B cell (primary cell): ENCODE measurements at regions of chr9 and their contacts with region 1.

Region 1: GRCh38 chr9:21443849-21444625 is 3.8 kb downstream of the IFNA1 start:
- DNase-seq: peak; percentile 88
- ATAC-seq: peak; percentile 92
- H3K4me3 ChIP-seq: no peak overlapping the region
- H3K4me3 Mint-ChIP-seq: peak overlapping the region; percentile 27
- H3K27ac ChIP-seq: peak overlapping the region in 1 of 2 donors; percentile 53
- H3K27ac Mint-ChIP-seq: peak overlapping the region; percentile 5
- H3K4me1 ChIP-seq: peaks cover 12 to 14% of the 10 kb centered on the region in 2 donors
- H3K4me1 Mint-ChIP-seq: peaks cover 13% of the 10 kb centered on the region
- H3K27me3 ChIP-seq: peaks cover 0 to 12% (median 3%) of the 10 kb centered on the region in 4 experiments
- H3K27me3 Mint-ChIP-seq: peaks cover 17% of the 10 kb centered on the region
- CTCF ChIP-seq: no peak

Region 2: DNA sequence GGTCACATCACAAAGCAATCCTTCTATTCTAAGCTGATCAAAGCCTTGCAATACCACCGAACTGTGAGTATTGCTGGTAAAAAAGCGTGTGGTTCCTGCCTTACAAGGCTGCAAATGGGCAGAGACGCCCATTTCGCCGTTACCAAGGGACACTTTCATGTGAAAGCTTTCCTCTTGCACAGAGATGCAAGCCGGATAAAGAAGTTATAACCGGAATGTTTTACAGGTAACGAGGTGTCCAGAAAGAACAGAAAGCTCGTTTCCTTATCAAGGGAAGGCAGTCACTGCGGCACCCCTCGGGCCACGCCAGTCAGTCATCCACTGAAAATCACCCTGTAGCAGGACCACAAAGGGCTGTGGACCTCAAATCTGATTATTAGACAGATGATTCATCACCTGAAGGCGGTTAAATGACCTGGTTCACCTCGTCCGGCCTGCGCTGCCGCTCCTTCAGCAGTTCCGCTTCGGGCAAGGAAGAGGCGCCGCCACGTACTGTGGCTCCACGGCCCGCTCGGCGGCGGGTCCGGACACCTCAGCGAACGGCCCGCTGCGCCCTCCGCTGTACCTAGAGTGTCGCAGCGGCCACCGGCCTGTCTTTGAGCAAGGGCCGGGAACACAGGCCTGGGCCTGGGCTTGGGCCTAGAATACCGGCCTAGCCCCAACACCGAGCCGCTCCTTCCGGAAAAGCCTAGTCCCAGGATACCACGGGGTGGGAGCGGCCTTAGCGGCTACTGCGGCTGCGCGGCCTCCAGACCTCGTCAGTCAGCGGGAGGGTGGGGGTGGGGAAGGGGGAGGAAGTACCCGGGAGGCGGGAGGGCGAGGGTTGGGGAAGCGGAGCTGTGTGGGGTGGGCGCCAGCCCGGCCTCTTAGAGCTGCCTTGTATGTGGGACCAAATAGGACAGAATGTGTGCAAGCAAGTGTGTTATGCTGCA is 109.1 kb before region 1 on chr9 and contains the start of gene KLHL9:
- CTCF ChIA-PET with region 1: interaction called, 4 read pairs
- POLR2A ChIA-PET with region 1: no interaction called
- intact Hi-C with region 1: loop called (anchors 2 kb)
- DNase-seq: peak; percentile 93
- ATAC-seq: peak; percentile 89
- H3K4me3 ChIP-seq: peak within 1 kb of the TSS; percentile 83 to 97 (median 89)
- H3K4me3 Mint-ChIP-seq: peak within 1 kb of the TSS; percentile 95
- H3K27ac ChIP-seq: peak within 1 kb of the TSS; percentile 90
- H3K27ac Mint-ChIP-seq: peak within 1 kb of the TSS; percentile 92
- H3K4me1 ChIP-seq: peaks cover 18 to 27% of the 10 kb centered on the region in 2 donors
- H3K4me1 Mint-ChIP-seq: peaks cover 49% of the 10 kb centered on the region
- H3K27me3 ChIP-seq: peaks cover 0 to 6% (median under 1%) of the 10 kb centered on the region in 4 experiments
- H3K27me3 Mint-ChIP-seq: peaks cover 12% of the 10 kb centered on the region
- CTCF ChIP-seq: no peak
- total RNA-seq, gene KLHL9: 17.5 and 17.6 TPM in 2 replicates

Region 3: DNA sequence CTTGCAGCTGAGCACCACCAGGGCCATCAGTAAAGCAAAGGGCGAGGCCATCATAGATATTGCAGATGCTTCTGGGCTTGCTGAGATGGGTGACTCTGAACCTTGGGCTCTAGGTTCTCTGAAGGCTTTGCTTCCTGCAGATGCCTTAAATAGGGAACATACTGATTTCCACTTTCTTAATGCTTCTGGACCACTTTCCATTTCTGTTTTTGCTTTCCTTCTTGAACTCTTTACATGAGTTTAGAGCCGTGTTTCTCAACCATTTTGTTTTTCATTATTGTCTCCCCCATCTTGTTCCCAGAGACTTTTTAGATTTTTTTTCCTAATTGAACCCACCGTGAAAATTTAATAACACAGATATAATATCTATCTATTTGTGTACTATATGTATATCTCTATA is 76.1 kb before region 1 on chr9 and contains the start of gene IFNA13:
- CTCF ChIA-PET with region 1: no interaction called
- POLR2A ChIA-PET with region 1: no interaction called
- intact Hi-C with region 1: loop called (anchors 2 kb)
- DNase-seq: no peak
- ATAC-seq: no peak
- H3K4me3 ChIP-seq: no peak within 1 kb of the TSS
- H3K4me3 Mint-ChIP-seq: no peak within 1 kb of the TSS
- H3K27ac ChIP-seq: no peak within 1 kb of the TSS
- H3K27ac Mint-ChIP-seq: no peak within 1 kb of the TSS
- H3K4me1 ChIP-seq: peaks cover 0 to 2% of the 10 kb centered on the region in 2 donors
- H3K4me1 Mint-ChIP-seq: peaks cover 2% of the 10 kb centered on the region
- H3K27me3 ChIP-seq: peaks cover 0 to 8% (median 4%) of the 10 kb centered on the region in 4 experiments
- H3K27me3 Mint-ChIP-seq: peaks cover 33% of the 10 kb centered on the region
- CTCF ChIP-seq: no peak
- total RNA-seq, gene IFNA13: not detected in 2 replicates